Heart left ventricle (tissue), 16 donors: ENCODE measurements at regions of chr17 and their contacts with region 1.

Region 1: DNA sequence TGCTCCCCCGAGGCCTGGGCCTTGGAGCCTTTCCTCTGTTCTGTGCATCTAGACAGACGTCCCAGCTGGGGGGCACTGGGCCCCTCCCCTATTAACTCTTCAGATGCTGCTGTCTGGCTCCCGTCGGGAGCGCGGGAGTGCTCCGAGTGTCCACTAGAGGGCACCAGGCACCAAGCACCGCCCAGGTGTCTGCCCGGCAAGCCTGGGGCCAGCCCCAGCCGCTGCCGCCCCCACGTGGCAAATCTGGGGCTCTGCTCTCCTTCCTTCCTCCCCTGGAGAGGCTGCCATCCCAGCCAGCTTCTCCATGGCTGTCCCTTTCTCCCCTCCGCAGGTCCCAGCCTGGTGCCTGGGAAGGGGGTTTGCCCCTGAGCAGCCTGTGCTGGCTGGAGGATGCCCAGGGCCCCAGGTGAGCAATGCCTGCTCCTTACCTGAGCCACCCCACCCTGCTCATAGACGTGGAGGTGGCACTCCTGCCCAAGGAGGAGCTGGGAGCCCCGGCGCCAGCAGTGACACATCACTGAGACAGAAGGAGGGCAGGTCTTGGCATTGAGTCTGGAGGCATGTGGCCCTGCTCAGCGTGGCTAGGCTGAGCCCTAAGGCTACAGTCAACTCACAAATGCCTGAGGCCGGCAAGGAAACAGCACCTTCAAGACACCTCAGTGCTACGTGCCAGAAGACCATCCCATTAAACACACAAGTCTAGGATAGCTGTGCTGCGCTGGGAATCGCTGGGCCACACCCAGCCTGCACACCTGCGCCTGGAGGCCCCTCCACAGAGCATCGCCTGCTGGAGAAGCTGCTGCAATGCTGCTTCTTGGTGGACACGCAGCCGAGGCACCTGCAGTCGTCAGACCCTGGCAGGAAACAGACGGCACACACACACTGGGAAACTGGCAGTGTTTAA is 19.7 kb downstream of the TMEM235 start:
- DNase-seq: peak; percentile 83 to 93 (median 86)
- ATAC-seq: peak; percentile 60 to 80 (median 76)
- H3K4me3 ChIP-seq: peak overlapping the region in 2 of 12 donors; percentile 18 to 38
- H3K27ac ChIP-seq: peak overlapping the region in 1 of 12 donors; percentile 64
- H3K4me1 ChIP-seq: peaks cover 0 to 45% (median 13%) of the 10 kb centered on the region in 12 donors
- H3K27me3 ChIP-seq: no peaks in the 10 kb centered on the region
- CTCF ChIP-seq: peak; percentile 97 to 100 (median 100)
- POLR2A ChIP-seq: peak in 1 of 2 donors; percentile 19

Region 2: GRCh38 chr17:78112518-78113226 is 138.5 kb before region 1 on chr17:
- intact Hi-C with region 1: loop called in 9 of 10 experiments (anchors 1 to 5 kb)
- DNase-seq: peak; percentile 73 to 92 (median 81)
- ATAC-seq: peak; percentile 27 to 66 (median 62)
- H3K4me3 ChIP-seq: no peak overlapping the region
- H3K27ac ChIP-seq: peak overlapping the region in 7 of 12 donors; percentile 1 to 54 (median 31)
- H3K4me1 ChIP-seq: peaks cover 0 to 63% (median 28%) of the 10 kb centered on the region in 12 donors
- H3K27me3 ChIP-seq: no peaks in the 10 kb centered on the region
- CTCF ChIP-seq: peak; percentile 99 to 100 (median 99)
- POLR2A ChIP-seq: no peak

Region 3: GRCh38 chr17:78128551-78129350 is 122.4 kb before region 1 on chr17 and contains the start of gene TMC6:
- intact Hi-C with region 1: loop called in 2 of 10 experiments (anchors 5 kb)
- DNase-seq: peak; percentile 62 to 78 (median 72)
- ATAC-seq: peak in 3 of 4 donors; percentile 13 to 38 (median 18)
- H3K4me3 ChIP-seq: peak within 1 kb of the TSS; percentile 71 to 98 (median 88)
- H3K27ac ChIP-seq: peak within 1 kb of the TSS; percentile 76 to 98 (median 94)
- H3K4me1 ChIP-seq: peaks cover 14 to 91% (median 63%) of the 10 kb centered on the region in 12 donors
- H3K27me3 ChIP-seq: peaks cover 0 to 4% (median 0%) of the 10 kb centered on the region in 9 donors
- CTCF ChIP-seq: no peak
- POLR2A ChIP-seq: peak in 1 of 2 donors; percentile 53
- total RNA-seq, gene TMC6: 41.5 to 139 (median 71.4) TPM

Region 4: DNA sequence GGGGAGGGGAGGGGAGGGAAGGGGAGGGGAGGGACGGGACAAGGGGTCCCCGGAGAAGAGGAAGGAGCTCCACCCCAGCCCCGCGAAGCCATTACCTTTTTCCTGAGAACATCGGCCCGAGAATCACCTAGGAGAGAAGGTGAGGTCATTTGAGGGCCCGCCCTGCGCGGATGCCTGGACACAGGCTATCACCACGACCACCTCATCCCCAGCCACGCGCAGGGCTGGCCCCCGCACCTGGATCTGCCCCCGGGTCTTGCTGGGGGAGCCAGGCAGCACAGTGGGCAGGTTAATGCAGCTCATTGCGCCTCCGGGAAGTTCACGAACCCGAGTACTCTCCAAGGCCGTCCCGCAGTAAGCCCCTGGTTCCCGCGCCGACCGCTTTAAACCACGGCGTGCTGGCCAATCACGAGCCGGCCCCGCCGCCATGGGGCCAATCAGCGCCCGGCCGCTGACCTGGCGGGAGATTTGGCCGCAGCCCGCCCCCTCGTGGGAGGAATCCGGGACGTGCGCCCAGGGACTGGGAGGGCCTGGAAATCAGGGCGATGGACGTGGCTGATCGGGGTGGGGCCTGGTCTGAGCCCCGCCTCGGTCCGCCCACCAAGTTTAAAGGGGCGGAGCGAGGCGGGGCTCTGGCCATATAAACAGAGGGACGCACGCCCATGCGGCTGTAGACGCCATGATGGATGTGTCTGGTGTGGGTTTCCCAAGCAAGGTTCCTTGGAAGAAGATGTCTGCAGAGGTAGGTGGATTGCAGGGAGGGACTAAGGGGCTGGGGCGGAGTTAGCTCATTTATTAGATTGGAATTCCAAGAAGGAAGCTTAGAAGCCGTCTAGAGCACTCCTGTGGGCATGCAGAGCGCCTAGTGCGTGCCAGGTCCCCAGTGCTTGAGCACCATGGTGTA is 64.2 kb before region 1 on chr17 and contains the starts of genes AFMID and TK1:
- intact Hi-C with region 1: loop called in 1 of 10 experiments (anchors 5 kb)
- DNase-seq: peak; percentile 96 to 99 (median 97)
- ATAC-seq: peak; percentile 98 to 99 (median 98)
- H3K4me3 ChIP-seq: peak within 1 kb of the TSS; percentile 15 to 74 (median 56)
- H3K27ac ChIP-seq: peak within 1 kb of the TSS in 11 of 12 donors; percentile 4 to 81 (median 54)
- H3K4me1 ChIP-seq: peaks cover 0 to 38% (median 10%) of the 10 kb centered on the region in 12 donors
- H3K27me3 ChIP-seq: no peaks in the 10 kb centered on the region
- CTCF ChIP-seq: peak; percentile 74 to 92 (median 84)
- POLR2A ChIP-seq: peak; percentile 41 to 87
- total RNA-seq, gene AFMID: 12.8 to 86.6 (median 33.1) TPM
- total RNA-seq, gene TK1: 0.29 to 21.7 (median 1.2) TPM

Region 5: DNA sequence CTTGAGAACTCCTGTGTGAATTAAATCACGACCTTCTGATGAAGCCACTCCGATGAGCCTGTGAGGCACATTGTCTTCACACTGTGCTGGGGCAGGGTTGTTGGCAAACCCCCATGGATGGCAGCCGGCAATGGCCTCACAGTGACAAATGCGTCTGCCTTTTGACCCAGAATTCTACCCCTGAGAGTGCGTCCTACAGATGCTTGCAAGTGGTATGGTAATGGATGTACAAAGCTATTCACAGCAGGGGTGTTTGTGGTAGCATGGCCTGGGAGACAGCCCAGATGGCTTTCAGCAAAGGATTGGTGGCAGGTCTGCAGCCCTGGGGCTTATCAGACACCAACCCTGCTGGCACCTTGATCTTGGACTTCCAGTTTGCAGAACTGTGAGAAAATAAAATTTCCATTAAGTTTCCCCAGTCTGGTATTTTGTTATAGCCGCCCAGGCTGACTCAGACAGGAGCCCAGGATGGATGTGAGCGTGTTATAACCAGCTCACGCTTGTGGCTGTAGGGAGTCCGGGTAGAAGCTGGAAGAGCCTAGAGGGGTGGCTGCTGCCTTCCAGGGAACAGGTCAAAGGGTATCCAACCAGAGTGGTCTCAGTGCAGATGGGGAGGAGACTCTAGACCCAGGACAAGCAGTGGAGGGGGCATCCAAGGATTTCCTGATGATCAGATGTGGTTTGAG is 53.9 kb before region 1 on chr17:
- intact Hi-C with region 1: no loop called
- DNase-seq: no peak
- ATAC-seq: no peak
- H3K4me3 ChIP-seq: no peak overlapping the region
- H3K27ac ChIP-seq: no peak overlapping the region
- H3K4me1 ChIP-seq: no peaks in the 10 kb centered on the region
- H3K27me3 ChIP-seq: no peaks in the 10 kb centered on the region
- CTCF ChIP-seq: no peak
- POLR2A ChIP-seq: no peak